AG04449 (cell line): ENCODE measurements at regions of chr6 and their contacts with region 1.

Region 1: DNA sequence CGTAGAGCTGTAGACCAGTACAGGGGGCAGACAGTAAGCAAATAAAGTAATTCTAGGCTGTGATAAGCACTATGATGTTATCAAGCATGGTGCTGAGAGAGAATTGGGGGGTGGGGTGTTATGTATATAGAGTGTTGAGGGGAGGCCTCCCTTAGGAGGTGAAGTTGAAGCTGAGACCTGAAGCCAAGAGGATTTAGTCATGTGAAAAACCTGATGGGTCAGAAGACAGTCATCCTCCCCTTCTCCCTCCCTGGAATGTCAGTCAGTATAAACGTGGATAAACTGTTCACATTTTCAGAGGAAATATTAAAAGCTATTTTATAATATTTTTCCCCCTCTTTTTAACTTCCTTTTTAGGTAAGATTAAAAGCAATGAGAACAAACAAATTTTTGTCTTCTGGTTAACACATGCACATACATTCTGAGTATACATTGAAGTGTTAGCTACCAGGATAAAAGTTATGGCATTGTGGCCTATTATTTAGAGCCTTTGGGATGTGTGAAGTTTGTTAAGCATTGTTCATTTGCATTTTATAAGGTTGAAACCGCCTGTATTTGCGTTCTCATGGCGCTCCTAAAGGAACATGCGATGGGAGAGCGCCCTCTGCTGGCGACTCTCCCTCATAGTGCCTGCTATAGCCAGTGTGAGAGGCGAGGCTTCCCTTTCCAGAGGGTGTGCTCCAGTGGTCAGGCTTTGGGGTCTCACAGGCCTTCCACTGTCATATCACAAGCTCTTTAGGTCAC is 35.4 kb upstream of the MAPK13 start:
- DNase-seq: peak; percentile 10
- H3K4me3 ChIP-seq: no peak overlapping the region
- CTCF ChIP-seq: peak; percentile 94

Region 2: GRCh38 chr6:36027501-36028087 is 67.3 kb before region 1 on chr6 and contains the start of gene MAPK14:
- CTCF ChIA-PET with region 1: interaction called, 210 read pairs
- POLR2A ChIA-PET with region 1: interaction called, 3 read pairs
- DNase-seq: peak; percentile 95
- H3K4me3 ChIP-seq: peak within 1 kb of the TSS; percentile 99
- CTCF ChIP-seq: peak; percentile 92

Region 3: GRCh38 chr6:36052097-36052496 is 42.8 kb before region 1 on chr6:
- CTCF ChIA-PET with region 1: interaction called, 19 read pairs
- POLR2A ChIA-PET with region 1: no interaction called
- DNase-seq: no peak
- H3K4me3 ChIP-seq: no peak overlapping the region
- CTCF ChIP-seq: no peak

Region 4: DNA sequence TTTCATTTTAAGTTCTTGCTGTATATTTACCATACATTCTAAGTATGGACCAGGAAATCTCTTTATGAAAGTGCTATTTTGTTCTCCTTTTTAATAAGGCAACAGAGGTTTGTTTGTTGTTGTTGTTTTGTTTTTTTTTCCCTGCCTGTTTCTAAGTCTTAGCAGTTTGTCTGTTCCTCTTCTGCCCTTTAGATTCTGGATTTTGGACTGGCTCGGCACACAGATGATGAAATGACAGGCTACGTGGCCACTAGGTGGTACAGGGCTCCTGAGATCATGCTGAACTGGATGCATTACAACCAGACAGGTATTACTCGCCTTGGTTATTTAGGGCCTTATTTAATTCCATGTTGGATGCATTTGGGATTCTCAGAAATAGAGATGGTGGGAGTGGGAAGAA is 19.3 kb before region 1 on chr6:
- CTCF ChIA-PET with region 1: interaction called, 92 read pairs
- POLR2A ChIA-PET with region 1: no interaction called
- DNase-seq: no peak
- H3K4me3 ChIP-seq: no peak overlapping the region
- CTCF ChIP-seq: no peak

Region 5: GRCh38 chr6:36123257-36124139 is 28.6 kb after region 1 on chr6:
- CTCF ChIA-PET with region 1: interaction called, 23 read pairs
- POLR2A ChIA-PET with region 1: no interaction called
- DNase-seq: no peak
- H3K4me3 ChIP-seq: no peak overlapping the region
- CTCF ChIP-seq: peak; percentile 91

Region 6: GRCh38 chr6:36187446-36187845 is 92.5 kb after region 1 on chr6:
- CTCF ChIA-PET with region 1: no interaction called
- POLR2A ChIA-PET with region 1: no interaction called
- DNase-seq: no peak
- H3K4me3 ChIP-seq: no peak overlapping the region
- CTCF ChIP-seq: no peak